ENCODE measurements at regions of chr9 and their contacts with region 1.

Region 1: DNA sequence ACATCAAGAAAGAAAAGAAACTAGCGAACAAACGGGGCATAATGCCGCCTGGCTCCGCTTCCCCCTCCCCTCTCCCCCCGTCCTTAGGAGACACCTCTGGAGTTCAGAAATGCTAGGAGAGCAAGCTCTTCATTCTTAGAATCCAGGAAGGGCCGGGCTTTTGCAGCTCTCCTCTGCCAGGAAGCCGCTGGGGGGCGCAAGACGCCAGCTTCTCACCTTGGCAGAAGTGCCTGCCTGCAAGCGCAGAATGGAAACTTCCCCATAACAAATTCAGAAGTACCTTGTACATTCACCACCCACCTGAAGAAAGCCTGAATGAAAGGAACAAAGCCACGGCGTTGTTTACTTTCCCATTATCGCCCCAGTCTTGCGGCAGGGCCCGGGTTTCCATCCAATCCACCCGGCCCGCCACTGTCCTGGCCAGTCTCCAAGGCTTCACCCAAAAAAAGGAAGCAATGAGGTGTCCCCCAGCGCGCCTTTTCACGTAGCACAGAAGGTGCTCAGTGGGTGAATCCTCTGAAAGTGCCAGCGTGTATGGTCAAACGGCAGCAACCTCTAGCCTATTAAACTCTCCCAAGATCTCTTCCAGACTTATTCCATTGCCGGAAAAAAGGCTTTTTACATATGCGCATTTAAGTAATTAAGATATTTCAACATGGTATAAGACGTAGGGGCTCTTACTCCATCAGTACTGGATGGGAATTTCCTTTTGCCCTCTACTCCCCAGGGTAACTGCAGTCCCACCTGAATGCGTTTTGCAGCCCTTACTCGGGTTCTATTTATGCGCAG is 1.6 kb upstream of the GADD45G start:
- DNase-seq: peak; percentile 89 to 97
- H3K4me3 ChIP-seq: no peak overlapping the region
- CTCF ChIP-seq: peak in 2 of 3 donors; percentile 58 to 60
- POLR2A ChIP-seq: no peak

Region 2: DNA sequence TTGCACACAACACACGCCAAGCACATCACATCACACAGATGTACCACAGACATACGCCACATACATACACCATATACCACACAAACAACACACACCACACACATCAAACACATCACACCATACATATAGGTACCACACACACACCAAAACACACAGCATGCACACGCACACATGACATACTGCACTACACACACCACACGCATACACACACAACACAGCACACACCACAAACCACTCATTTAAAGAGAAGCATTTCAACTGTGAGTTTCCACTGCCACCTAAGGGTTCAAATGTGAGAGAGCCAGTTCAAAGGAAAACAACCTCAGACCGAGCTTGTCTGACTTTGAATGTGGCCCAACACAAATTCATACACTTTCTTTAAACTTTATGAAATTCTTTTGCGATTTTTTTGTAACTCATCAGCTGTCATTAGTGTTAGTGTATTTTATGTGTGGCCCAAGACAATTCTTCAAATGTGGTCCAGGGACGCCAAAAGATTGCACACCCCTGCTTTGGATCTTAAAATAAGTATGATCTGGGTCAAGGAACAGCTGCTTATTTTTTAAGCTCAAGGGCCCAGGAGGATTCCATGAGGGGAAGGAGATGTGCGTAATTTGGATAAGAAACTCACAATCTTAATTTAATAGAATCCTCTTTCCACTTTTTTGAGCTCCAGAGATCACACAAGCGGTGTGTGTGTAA is 496.2 kb after region 1 on chr9:
- intact Hi-C with region 1: loop called (anchors 5 kb)
- DNase-seq: no peak
- H3K4me3 ChIP-seq: no peak overlapping the region
- CTCF ChIP-seq: no peak
- POLR2A ChIP-seq: no peak

Measured in lower leg skin (tissue), 4 donors.